ENCODE measurements at regions of chr18 and their contacts with region 1.

Region 1: DNA sequence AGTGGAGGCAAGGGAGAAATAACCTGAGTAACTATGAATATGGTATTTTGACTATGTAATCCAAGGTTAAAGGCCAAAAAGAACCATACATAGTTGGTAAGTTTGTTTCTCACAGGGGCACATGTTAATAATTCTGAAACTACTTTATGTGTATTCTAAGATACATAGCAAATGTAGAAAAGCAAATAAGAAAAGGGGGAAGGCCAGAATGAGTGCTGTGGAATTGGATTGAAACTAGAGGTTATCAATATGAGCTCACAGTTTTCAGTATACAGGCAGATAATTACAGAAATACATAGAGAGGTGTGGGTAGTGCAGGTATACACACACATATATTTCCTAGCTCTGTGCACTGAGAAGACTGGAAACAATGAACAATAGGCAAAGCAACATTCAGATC is 13.7 kb downstream of the INO80C start:
- DNase-seq: no peak
- H3K4me3 Mint-ChIP-seq: no peak overlapping the region
- H3K27ac Mint-ChIP-seq: no peak overlapping the region
- H3K4me1 Mint-ChIP-seq: peaks cover 3% of the 10 kb centered on the region
- H3K27me3 Mint-ChIP-seq: no peaks in the 10 kb centered on the region

Region 2: DNA sequence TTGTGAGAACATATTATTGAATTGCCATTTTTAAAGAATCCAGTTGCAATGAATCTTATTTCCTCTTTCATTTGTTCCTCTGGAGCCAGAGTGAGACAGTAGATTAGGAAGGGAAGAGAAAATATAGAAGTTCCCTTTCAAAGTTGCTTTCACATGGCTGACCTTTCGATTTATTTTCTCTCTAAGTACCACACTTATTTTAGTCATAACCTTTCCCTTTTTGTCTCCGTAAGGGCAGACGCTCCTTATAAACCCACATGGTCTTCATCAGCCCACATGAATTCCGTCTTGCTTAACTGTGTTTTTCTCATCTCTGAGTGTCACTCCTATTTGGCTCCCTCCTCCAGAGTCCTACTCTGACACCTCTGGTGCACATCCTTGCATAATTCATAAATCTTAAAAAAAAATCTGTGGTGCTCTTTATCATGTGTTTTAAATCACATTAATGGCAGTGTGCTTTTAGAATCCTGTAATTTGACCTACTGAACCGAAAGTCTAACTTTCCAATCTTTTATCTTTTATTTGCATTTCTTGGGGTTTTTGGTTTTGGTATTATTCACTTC is 68.4 kb before region 1 on chr18:
- intact Hi-C with region 1: loop called (anchors 5 kb)
- DNase-seq: no peak
- H3K4me3 Mint-ChIP-seq: peak overlapping the region; percentile 29
- H3K27ac Mint-ChIP-seq: peak overlapping the region; percentile 25
- H3K4me1 Mint-ChIP-seq: peaks cover 32% of the 10 kb centered on the region
- H3K27me3 Mint-ChIP-seq: no peaks in the 10 kb centered on the region

Measured in activated T-helper 1 cell treated with anti-CD3 and anti-CD28 coated beads, Interleukin-12 subunit alpha, Interleukin-12 subunit beta, Interleukin-2, Interleukin-4 antibody, amounts not matched to agents 30 ng/mL and 10 ng/mL and 1 ng/mL, durations not matched to agents 14 hours and 24 hours and 36 hours (primary cell).